Panc1 (cell line): ENCODE measurements at regions of chr15 and their contacts with region 1.

Region 1: DNA sequence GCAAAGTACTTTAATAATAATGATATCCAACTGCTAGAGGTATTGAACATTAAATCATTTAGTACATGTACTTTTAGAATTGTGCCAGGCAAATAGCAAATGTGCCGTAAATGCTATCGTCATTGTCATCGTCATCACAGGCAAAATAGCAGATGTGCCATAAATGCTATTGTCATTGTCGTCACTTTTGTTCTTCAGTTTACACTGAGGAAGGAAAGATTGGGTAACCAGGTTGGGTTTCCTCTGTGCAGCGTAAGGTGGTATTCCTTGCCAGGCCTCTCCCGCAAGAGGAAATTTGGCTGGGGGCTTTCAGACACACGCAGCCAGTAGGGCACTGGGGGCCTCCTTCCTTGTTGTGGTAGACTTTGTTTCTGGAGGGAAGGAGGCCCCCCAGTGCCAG is 26.4 kb downstream of the ABHD17C start:
- DNase-seq: no peak
- ATAC-seq: no peak
- H3K4me3 ChIP-seq: no peak overlapping the region
- H3K27ac ChIP-seq: no peak overlapping the region
- H3K4me1 ChIP-seq: no peaks in the 10 kb centered on the region
- H3K27me3 ChIP-seq: no peaks in the 10 kb centered on the region
- CTCF ChIP-seq: no peak

Region 2: DNA sequence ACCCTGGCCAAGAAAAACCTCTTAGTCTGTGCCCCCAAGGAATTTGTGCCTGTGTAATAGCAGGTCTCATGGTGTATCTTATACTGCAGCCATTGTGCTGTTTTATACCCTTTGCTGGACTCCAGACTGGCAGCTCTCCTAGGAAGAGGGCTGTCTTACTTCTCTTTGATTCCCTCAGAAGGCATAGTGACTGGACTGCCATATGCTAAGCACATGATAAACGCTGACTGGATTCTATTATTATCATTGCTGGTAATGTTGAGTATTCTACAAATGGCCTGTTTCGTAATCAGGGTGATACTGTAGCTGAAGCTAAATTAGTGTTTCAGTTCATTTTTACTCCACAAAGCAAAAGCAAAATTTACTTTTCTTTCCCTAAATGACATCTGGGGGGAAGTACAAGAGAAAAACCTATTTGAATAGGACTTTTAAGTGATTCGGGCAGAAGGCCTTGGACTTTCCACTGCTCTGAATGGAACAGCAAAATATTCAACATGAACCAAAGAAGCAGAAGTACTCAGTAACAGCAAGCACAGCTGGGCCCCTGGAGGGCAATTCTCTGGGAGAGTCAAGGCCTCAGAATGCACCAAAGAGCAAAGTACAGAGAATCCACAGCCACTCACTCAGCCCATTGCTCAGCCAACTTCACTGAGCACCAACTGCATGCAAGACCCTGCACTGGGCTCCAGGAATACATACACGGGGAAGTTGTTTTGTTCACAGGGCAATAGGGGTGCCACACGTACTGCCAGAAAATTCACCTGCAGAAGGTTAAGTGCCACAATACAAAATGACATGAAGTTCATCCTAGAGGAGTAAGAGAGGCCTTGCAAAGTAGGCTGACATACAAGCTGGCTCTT is 742.6 kb before region 1 on chr15:
- CTCF ChIA-PET with region 1: no interaction called
- POLR2A ChIA-PET with region 1: interaction called, 12 read pairs
- in situ Hi-C with region 1: no loop called
- intact Hi-C with region 1: no loop called
- DNase-seq: no peak
- ATAC-seq: peak; percentile 48; the same call in 1 of the 2 replicates
- H3K4me3 ChIP-seq: no peak overlapping the region
- H3K27ac ChIP-seq: 0 out of 2 replicates have a peak overlapping the region, but pooled peaks have one; percentile 9
- H3K4me1 ChIP-seq: no peaks in the 10 kb centered on the region
- H3K27me3 ChIP-seq: no peaks in the 10 kb centered on the region
- CTCF ChIP-seq: no peak

Region 3: DNA sequence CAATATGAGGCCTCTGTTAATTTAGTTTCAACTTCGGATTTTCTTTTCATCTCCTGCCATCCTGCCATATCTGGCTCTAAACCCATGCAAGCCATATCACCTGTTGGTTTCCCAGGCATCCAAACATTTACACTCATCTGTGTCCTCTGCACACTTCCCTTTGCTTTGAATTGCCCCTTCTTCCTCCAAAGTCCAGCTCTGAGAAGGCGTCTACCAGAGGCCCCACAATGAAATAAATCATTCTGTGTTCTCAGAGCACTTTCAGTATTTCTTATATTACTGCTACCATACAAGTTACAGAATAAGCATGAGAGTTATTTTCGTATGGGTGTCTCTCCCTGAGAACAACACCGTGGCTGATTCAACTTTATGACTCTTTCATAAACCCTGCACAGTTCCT is 39.3 kb before region 1 on chr15:
- CTCF ChIA-PET with region 1: interaction called, 10 read pairs
- POLR2A ChIA-PET with region 1: no interaction called
- in situ Hi-C with region 1: no loop called
- intact Hi-C with region 1: no loop called
- DNase-seq: no peak
- ATAC-seq: no peak
- H3K4me3 ChIP-seq: no peak overlapping the region
- H3K27ac ChIP-seq: no peak overlapping the region
- H3K4me1 ChIP-seq: no peaks in the 10 kb centered on the region
- H3K27me3 ChIP-seq: peaks cover 4% of the 10 kb centered on the region; the same call in 1 of the 2 replicates
- CTCF ChIP-seq: no peak

Region 4: GRCh38 chr15:80710635-80711554 is 10.6 kb before region 1 on chr15:
- CTCF ChIA-PET with region 1: no interaction called
- POLR2A ChIA-PET with region 1: no interaction called
- in situ Hi-C with region 1: no loop called
- intact Hi-C with region 1: no loop called
- DNase-seq: no peak
- ATAC-seq: no peak
- H3K4me3 ChIP-seq: no peak overlapping the region
- H3K27ac ChIP-seq: no peak overlapping the region
- H3K4me1 ChIP-seq: no peaks in the 10 kb centered on the region
- H3K27me3 ChIP-seq: no peaks in the 10 kb centered on the region
- CTCF ChIP-seq: no peak

Region 5: GRCh38 chr15:80804965-80805495 is 83.6 kb after region 1 on chr15:
- CTCF ChIA-PET with region 1: no interaction called
- POLR2A ChIA-PET with region 1: no interaction called
- in situ Hi-C with region 1: no loop called
- intact Hi-C with region 1: no loop called
- DNase-seq: no peak
- ATAC-seq: peak; percentile 72
- H3K4me3 ChIP-seq: no peak overlapping the region
- H3K27ac ChIP-seq: no peak overlapping the region
- H3K4me1 ChIP-seq: no peaks in the 10 kb centered on the region
- H3K27me3 ChIP-seq: peaks cover 10% of the 10 kb centered on the region
- CTCF ChIP-seq: no peak